A549 (cell line): ENCODE measurements at regions of chr14 and their contacts with region 1.

Region 1: GRCh38 chr14:99320105-99320572 is 48.1 kb upstream of the BCL11B start:
- DNase-seq: peak; percentile 71 to 77
- ATAC-seq: peak; percentile 54 to 80; a peak in 5 of 6 replicates
- H3K4me3 ChIP-seq: 0 out of 3 replicates have a peak overlapping the region, but pooled peaks have one; percentile 3
- H3K27ac ChIP-seq: peak overlapping the region; percentile 53 to 87
- H3K4me1 ChIP-seq: peaks cover 54% of the 10 kb centered on the region
- CTCF ChIP-seq: peak; percentile 91
- EP300 ChIP-seq: no peak
- POLR2A ChIP-seq: no peak
- RAD21 ChIP-seq: peak; percentile 48 to 59; a peak in 4 of 5 replicates

Region 2: GRCh38 chr14:99252940-99253868 is 66.9 kb before region 1 on chr14:
- CTCF ChIA-PET with region 1: no interaction called
- POLR2A ChIA-PET with region 1: no interaction called
- DNase-seq: no peak
- ATAC-seq: peak in 1 of 2 experiments; percentile 26; a peak in 1 of 6 replicates
- H3K4me3 ChIP-seq: no peak overlapping the region
- H3K27ac ChIP-seq: no peak overlapping the region
- H3K4me1 ChIP-seq: peaks cover 6% of the 10 kb centered on the region; the same call in 1 of the 3 replicates
- CTCF ChIP-seq: no peak
- EP300 ChIP-seq: no peak
- POLR2A ChIP-seq: no peak
- RAD21 ChIP-seq: no peak

Region 3: DNA sequence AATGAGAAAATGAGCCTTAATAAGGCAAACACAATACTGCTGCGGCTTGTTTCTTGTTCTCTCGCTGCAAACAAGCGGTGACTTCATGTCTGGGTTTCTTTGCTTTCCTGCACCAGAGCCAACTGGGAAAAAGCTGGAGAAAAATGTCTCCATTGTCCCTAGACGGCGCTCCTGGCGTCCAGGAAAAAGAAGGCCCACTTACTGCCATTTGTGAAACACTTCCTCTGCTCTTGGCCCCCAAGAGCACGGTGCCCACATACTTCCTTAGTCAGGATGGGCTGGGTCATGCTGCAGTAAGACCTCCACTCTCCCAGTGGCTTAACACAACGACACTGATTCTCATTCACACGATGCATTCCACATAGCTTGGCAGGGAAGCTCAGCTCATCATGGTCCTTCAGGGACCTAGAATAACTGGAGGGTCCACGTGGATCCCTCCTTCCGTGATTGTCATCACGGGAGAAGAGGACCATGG is 37.8 kb after region 1 on chr14:
- CTCF ChIA-PET with region 1: interaction called, 24 read pairs
- POLR2A ChIA-PET with region 1: no interaction called
- DNase-seq: no peak
- ATAC-seq: no peak
- H3K4me3 ChIP-seq: no peak overlapping the region
- H3K27ac ChIP-seq: no peak overlapping the region
- H3K4me1 ChIP-seq: no peaks in the 10 kb centered on the region
- CTCF ChIP-seq: no peak
- EP300 ChIP-seq: no peak
- POLR2A ChIP-seq: no peak
- RAD21 ChIP-seq: no peak

Region 4: GRCh38 chr14:99378782-99379214 is 58.7 kb after region 1 on chr14:
- CTCF ChIA-PET with region 1: interaction called, 26 read pairs
- POLR2A ChIA-PET with region 1: no interaction called
- DNase-seq: peak; percentile 72 to 78
- ATAC-seq: peak; percentile 82 to 85
- H3K4me3 ChIP-seq: no peak overlapping the region
- H3K27ac ChIP-seq: peak overlapping the region; percentile 72 to 85
- H3K4me1 ChIP-seq: peaks cover 38% of the 10 kb centered on the region
- CTCF ChIP-seq: no peak
- EP300 ChIP-seq: no peak
- POLR2A ChIP-seq: no peak
- RAD21 ChIP-seq: no peak

Region 5: GRCh38 chr14:99408286-99408970 is 88.3 kb after region 1 on chr14:
- CTCF ChIA-PET with region 1: interaction called, 45 read pairs
- POLR2A ChIA-PET with region 1: no interaction called
- DNase-seq: no peak
- ATAC-seq: no peak
- H3K4me3 ChIP-seq: no peak overlapping the region
- H3K27ac ChIP-seq: no peak overlapping the region
- H3K4me1 ChIP-seq: no peaks in the 10 kb centered on the region
- CTCF ChIP-seq: no peak
- EP300 ChIP-seq: no peak
- POLR2A ChIP-seq: no peak
- RAD21 ChIP-seq: no peak

Region 6: GRCh38 chr14:99809360-99809759 is 489.2 kb after region 1 on chr14:
- CTCF ChIA-PET with region 1: no interaction called
- POLR2A ChIA-PET with region 1: no interaction called
- DNase-seq: no peak
- ATAC-seq: no peak
- H3K4me3 ChIP-seq: no peak overlapping the region
- H3K27ac ChIP-seq: no peak overlapping the region
- H3K4me1 ChIP-seq: no peaks in the 10 kb centered on the region
- CTCF ChIP-seq: no peak
- EP300 ChIP-seq: no peak
- POLR2A ChIP-seq: no peak
- RAD21 ChIP-seq: no peak